ENCODE measurements at regions of chr2 and their contacts with region 1.

Region 1: DNA sequence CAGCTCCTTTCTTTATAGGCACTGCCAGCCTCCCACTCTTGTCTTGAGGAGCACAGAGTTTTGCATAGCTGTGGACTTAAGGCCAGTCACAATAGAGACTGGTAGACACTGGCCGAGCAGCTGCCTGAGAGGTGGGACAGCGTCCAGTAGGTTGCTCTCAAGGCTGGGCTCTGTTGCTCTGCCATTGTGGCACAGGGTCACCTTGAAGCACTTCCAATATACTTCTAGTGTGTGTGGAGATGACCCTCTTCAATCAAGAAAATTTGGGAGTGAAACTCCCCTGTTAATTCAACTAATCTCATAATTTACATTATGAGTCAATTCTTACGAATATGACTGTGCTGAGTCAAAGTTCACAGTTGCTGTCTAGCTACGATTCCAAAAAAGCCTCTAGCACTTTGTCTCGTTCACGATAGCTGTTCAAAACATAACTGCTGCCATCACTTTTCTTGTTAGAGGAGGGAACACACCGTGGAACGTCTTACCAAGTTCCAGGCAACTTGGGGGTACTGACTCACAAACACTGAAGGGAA is 636.2 kb downstream of the EPHA4 start:
- DNase-seq: peak; percentile 57
- H3K4me3 Mint-ChIP-seq: no peak overlapping the region
- H3K27ac Mint-ChIP-seq: peak overlapping the region; percentile 44
- H3K4me1 Mint-ChIP-seq: peaks cover 17% of the 10 kb centered on the region
- H3K27me3 Mint-ChIP-seq: peaks cover 3% of the 10 kb centered on the region

Region 2: DNA sequence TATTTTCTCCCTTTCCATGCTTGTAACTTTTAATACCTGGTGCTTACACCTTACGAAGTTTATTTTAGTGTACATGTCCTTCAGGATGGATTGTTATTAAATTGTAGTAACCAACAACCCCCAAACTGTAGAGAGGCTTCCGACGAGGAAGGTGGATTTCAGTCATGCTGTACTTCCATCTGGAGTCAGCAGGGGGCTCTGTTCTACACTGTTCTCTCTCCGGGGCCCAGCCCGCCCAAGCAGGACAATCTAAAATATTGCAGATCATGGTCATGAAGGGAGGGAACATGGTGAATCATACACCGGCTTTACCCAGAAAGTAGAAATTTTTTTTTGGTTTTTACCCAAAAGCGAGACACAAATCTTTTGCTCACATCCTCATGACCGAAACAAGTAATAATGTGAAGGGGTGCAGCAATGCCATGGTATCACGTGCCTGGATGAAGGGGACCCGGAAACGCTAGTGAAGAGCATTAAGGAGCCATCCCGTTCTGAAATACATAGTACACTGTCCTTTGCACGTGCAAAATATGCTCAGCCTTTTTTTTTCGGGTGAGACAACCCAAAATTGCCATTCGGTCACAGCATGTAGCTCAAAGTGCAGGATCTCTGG is 248.5 kb before region 1 on chr2:
- CTCF ChIA-PET with region 1: no interaction called
- POLR2A ChIA-PET with region 1: no interaction called
- intact Hi-C with region 1: loop called (anchors 10 kb)
- DNase-seq: peak; percentile 74
- H3K4me3 Mint-ChIP-seq: no peak overlapping the region
- H3K27ac Mint-ChIP-seq: no peak overlapping the region
- H3K4me1 Mint-ChIP-seq: no peaks in the 10 kb centered on the region
- H3K27me3 Mint-ChIP-seq: peaks cover 11% of the 10 kb centered on the region

Region 3: GRCh38 chr2:220915092-220915623 is 20.7 kb before region 1 on chr2:
- CTCF ChIA-PET with region 1: no interaction called
- POLR2A ChIA-PET with region 1: no interaction called
- intact Hi-C with region 1: no loop called
- DNase-seq: no peak
- H3K4me3 Mint-ChIP-seq: no peak overlapping the region
- H3K27ac Mint-ChIP-seq: no peak overlapping the region
- H3K4me1 Mint-ChIP-seq: no peaks in the 10 kb centered on the region
- H3K27me3 Mint-ChIP-seq: peaks cover 4% of the 10 kb centered on the region